ENCODE measurements at regions of chr2 and their contacts with region 1.

Region 1: DNA sequence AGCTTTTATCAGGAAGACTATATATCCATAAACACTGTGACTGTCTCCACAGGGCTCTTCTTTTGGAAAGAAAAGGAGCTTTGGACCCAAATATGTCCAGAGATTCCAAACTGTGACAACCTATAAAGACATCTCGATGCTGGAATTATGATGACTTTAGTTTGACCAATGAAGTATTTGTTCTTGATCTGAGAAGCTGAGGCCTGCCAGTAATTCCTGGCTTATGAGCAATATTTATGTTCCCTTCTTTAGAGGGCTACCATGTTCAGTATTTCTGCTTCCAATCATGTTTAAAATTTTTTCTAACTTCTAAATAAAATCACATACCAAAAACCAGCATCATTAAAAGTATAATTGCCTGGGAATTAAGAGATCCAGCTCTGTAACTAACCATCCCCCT is 41.1 kb downstream of the FEZ2 start:
- H3K4me3 Mint-ChIP-seq: no peak overlapping the region
- H3K27ac Mint-ChIP-seq: no peak overlapping the region
- H3K4me1 Mint-ChIP-seq: peaks cover 39% of the 10 kb centered on the region
- H3K27me3 Mint-ChIP-seq: no peaks in the 10 kb centered on the region

Region 2: DNA sequence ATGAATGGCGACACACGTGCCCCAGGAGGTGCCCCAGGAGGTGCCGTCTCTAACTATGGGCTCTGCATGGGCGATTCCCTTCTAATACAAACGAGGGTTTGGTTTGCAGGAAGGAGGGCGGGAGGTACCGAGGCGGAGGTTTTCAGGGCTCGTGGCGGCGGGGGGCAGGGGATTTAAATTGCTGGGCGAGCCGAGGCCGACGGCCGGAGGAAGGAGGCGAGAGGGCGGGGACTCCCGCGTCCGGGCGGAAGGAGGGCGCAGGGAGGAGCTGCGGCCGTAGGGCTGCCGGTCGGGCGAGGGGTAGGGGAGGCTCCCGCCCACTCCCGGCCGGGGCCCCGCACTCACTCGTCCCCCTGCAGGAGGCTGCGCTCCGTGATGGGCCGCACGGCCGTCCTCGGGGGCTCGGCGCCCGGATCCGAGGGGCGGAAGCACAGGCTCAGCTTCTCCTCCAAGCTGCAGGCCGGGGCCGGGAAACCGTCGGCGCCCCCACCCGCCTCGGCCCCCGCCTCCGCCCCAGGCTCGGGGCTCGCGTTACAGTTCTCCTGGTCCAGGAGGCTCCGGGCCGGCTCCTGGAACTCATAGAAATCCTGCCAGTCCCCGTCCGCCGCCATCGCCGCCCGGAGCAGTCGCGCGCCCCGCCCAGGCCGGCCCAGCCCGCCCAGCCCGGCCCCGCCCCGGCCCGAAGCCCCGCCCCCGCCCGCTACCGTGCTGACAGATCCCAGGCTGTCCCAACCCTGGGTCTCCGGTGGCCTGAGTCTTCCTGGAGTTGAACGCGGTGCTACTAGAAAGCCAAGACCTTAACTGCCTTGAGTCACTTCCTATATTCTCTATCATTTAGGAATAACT is 40.9 kb after region 1 on chr2 and contains the start of gene FEZ2:
- intact Hi-C with region 1: loop called (anchors 5 kb)
- H3K4me3 Mint-ChIP-seq: peak within 1 kb of the TSS; percentile 89
- H3K27ac Mint-ChIP-seq: peak within 1 kb of the TSS; percentile 82
- H3K4me1 Mint-ChIP-seq: peaks cover 39% of the 10 kb centered on the region
- H3K27me3 Mint-ChIP-seq: no peaks in the 10 kb centered on the region

Region 3: GRCh38 chr2:36618028-36618780 is 61.4 kb after region 1 on chr2:
- intact Hi-C with region 1: no loop called
- H3K4me3 Mint-ChIP-seq: no peak overlapping the region
- H3K27ac Mint-ChIP-seq: no peak overlapping the region
- H3K4me1 Mint-ChIP-seq: no peaks in the 10 kb centered on the region
- H3K27me3 Mint-ChIP-seq: peaks cover under 1% of the 10 kb centered on the region

Region 4: DNA sequence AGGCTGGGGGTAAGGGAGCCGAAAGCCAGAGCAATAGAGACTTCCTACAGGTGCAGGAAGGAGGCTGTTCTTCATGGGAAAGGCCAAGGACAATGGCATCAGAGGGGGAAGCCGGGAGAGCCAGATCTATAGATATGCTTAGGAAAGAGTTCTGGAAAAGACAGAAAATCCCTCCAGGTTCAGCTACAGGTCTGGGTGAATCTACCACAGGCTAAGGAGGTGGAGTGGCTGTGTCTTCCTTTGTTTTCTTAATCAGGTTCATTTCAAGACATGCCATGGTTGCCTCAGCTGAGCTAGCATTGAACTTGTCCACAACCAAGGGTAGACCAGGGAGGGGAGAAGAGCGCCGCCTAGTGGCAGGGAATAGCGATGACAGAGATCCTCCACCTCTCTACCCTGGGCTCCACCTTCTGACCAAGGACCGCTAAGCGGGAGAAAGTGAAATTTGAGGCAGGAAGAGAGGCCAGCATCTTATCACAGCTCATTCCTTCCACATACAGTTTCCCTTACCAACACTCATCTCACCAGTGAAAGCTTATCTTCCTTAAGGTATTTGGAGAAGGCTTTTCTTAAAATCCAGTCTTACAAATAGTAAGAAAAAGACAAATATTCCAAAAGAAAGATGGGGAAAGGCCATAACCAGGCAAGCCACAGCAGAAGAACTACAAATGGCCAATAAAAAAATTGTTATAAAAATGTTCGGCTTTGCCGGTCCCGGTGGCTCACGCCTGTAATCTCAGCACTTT is 213.9 kb after region 1 on chr2:
- intact Hi-C with region 1: no loop called
- H3K4me3 Mint-ChIP-seq: no peak overlapping the region
- H3K27ac Mint-ChIP-seq: no peak overlapping the region
- H3K4me1 Mint-ChIP-seq: no peaks in the 10 kb centered on the region
- H3K27me3 Mint-ChIP-seq: no peaks in the 10 kb centered on the region

Measured in dendritic cell treated with granulocyte-macrophage colony-stimulating factor and Interleukin-4, amounts not matched to agents 40 ng/mL and 50 ng/mL, for 4 days (primary cell).